Caco-2 (cell line): ENCODE measurements at regions of chr6 and their contacts with region 1.

Region 1: DNA sequence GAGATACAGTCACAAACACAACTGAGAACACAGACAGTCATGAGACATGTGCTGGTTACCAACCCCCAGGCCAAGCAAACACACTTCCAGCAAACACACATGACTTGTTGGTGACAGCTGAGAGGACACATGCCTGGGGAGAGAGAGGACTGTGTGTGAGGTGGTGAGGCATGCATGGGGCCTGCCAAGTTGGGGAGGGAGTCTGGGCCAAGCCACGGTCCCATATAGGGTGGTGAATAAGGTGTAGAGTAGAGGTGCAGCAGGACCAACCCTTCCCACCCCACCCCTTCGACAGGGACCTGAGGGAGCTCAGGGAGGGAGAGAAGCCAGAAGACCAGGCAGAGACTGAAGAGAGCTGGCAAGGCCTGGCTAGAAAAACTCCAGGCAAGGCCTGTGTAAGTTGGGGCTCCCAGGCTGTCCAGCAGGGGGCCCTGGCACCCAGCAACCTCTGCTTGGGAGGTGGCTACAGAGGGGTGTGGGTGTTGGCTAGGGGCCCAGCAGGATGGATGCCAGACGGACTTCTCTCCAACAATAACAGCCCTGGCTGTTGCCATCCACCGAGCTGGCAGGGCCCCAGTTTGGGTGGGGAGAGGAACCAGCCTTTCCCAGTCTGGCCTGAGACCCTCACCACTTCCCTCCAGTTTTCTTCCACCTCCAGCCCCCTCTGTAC is 2.0 kb upstream of the SLC29A1 start:
- DNase-seq: peak; percentile 74 to 79
- H3K4me3 ChIP-seq: no peak overlapping the region
- H3K4me3 Mint-ChIP-seq: peak overlapping the region; percentile 89
- H3K27ac Mint-ChIP-seq: no peak overlapping the region
- H3K4me1 ChIP-seq: peaks cover 45% of the 10 kb centered on the region
- H3K4me1 Mint-ChIP-seq: peaks cover 15% of the 10 kb centered on the region
- H3K27me3 ChIP-seq: no peaks in the 10 kb centered on the region
- H3K27me3 Mint-ChIP-seq: no peaks in the 10 kb centered on the region
- CTCF ChIP-seq: peak; percentile 59 to 83

Region 2: GRCh38 chr6:42387336-42387735 is 1834.1 kb before region 1 on chr6:
- CTCF ChIA-PET with region 1: no interaction called
- POLR2A ChIA-PET with region 1: no interaction called
- intact Hi-C with region 1: no loop called
- DNase-seq: no peak
- H3K4me3 ChIP-seq: no peak overlapping the region
- H3K4me3 Mint-ChIP-seq: no peak overlapping the region
- H3K27ac Mint-ChIP-seq: no peak overlapping the region
- H3K4me1 ChIP-seq: no peaks in the 10 kb centered on the region
- H3K4me1 Mint-ChIP-seq: no peaks in the 10 kb centered on the region
- H3K27me3 ChIP-seq: no peaks in the 10 kb centered on the region
- H3K27me3 Mint-ChIP-seq: peaks cover 6% of the 10 kb centered on the region
- CTCF ChIP-seq: no peak

Region 3: DNA sequence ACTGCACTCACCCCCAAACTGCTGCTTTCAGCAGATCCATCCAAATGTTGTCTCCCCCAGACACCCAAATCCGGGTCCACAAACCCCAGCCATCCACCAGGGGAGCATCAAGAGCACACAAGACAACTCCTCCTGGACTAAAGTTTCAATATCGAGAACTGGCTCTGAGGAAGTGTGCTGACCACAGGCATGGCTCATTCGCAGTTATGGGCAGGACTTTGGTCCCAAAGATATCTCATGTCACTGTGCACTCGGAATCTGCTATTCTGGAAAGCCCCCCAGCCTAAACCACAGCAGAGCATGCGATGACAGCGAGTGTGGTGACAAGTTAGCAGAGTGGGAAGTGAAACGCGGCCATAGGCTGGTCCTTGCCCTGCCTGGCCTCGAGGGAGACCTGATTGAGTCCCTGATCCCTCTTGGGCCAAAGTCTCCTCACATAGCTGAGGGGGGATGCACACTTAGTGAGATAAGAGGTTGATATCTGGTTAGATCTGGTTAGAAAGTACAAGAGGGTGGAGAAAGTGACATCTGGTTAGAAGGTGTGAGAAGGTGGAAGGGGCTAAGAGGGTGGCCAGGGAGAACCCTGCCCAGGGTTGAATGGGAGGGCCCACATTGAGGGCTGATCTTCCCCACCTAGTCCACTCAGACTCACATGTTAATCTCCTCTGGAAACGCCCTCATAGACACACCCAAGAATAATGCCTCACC is 243.9 kb before region 1 on chr6:
- CTCF ChIA-PET with region 1: no interaction called
- POLR2A ChIA-PET with region 1: no interaction called
- intact Hi-C with region 1: no loop called
- DNase-seq: no peak
- H3K4me3 ChIP-seq: no peak overlapping the region
- H3K4me3 Mint-ChIP-seq: no peak overlapping the region
- H3K27ac Mint-ChIP-seq: no peak overlapping the region
- H3K4me1 ChIP-seq: peaks cover 18% of the 10 kb centered on the region
- H3K4me1 Mint-ChIP-seq: peaks cover 7% of the 10 kb centered on the region
- H3K27me3 ChIP-seq: no peaks in the 10 kb centered on the region
- H3K27me3 Mint-ChIP-seq: no peaks in the 10 kb centered on the region
- CTCF ChIP-seq: no peak

Region 4: GRCh38 chr6:44172731-44173500 is 48.5 kb before region 1 on chr6:
- CTCF ChIA-PET with region 1: interaction called, 10 read pairs
- POLR2A ChIA-PET with region 1: interaction called, 3 read pairs
- intact Hi-C with region 1: loop called (anchors 1 kb)
- DNase-seq: peak; percentile 79 to 80
- H3K4me3 ChIP-seq: no peak overlapping the region
- H3K4me3 Mint-ChIP-seq: no peak overlapping the region
- H3K27ac Mint-ChIP-seq: no peak overlapping the region
- H3K4me1 ChIP-seq: peaks cover 8% of the 10 kb centered on the region; the same call in 1 of the 2 replicates
- H3K4me1 Mint-ChIP-seq: peaks cover 7% of the 10 kb centered on the region
- H3K27me3 ChIP-seq: no peaks in the 10 kb centered on the region
- H3K27me3 Mint-ChIP-seq: no peaks in the 10 kb centered on the region
- CTCF ChIP-seq: peak; percentile 79 to 88

Region 5: GRCh38 chr6:44203991-44204390 is 17.4 kb before region 1 on chr6:
- CTCF ChIA-PET with region 1: interaction called, 3 read pairs
- POLR2A ChIA-PET with region 1: interaction called, 4 read pairs
- intact Hi-C with region 1: loop called (anchors 1 kb)
- DNase-seq: peak; percentile 44 to 80
- H3K4me3 ChIP-seq: no peak overlapping the region
- H3K4me3 Mint-ChIP-seq: peak overlapping the region; percentile 7
- H3K27ac Mint-ChIP-seq: peak overlapping the region; percentile 81
- H3K4me1 ChIP-seq: peaks cover 36% of the 10 kb centered on the region
- H3K4me1 Mint-ChIP-seq: peaks cover 40% of the 10 kb centered on the region
- H3K27me3 ChIP-seq: no peaks in the 10 kb centered on the region
- H3K27me3 Mint-ChIP-seq: no peaks in the 10 kb centered on the region
- CTCF ChIP-seq: no peak

Region 6: DNA sequence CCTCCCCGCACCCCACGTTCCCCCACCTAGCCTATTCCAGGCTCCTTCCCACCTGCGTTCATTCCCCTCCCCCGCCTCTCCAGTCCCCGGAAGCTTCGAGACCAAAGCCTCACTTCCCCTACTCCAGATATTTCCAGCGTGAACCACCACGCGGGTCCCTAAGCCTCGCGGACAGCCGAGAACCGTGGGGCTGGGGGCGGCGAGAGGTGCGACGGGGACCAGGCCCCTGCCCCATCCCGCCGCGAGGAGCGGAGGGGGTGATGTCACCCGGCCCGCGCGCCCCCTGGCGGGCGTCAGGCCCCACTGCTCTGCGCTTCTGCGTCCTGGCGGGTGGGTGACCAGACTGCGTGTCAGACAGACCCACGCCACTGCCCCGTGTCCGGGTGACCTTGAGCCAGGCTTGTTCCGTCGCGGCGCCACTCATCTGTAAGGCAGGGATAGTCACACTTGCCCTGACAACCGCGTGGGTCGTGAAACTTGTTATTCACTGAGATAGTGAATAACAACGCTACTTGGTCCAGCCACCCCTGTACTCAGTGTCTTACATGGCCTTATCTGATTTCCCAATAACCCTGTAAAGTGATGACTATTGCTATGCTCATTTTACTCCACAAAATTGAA is 16.5 kb after region 1 on chr6:
- CTCF ChIA-PET with region 1: interaction called, 25 read pairs
- POLR2A ChIA-PET with region 1: interaction called, 5 read pairs
- intact Hi-C with region 1: loop called (anchors 1 kb)
- DNase-seq: peak; percentile 69 to 90
- H3K4me3 ChIP-seq: peak overlapping the region; percentile 58
- H3K4me3 Mint-ChIP-seq: peak overlapping the region; percentile 89
- H3K27ac Mint-ChIP-seq: peak overlapping the region; percentile 95
- H3K4me1 ChIP-seq: peaks cover 19% of the 10 kb centered on the region
- H3K4me1 Mint-ChIP-seq: peaks cover 17% of the 10 kb centered on the region
- H3K27me3 ChIP-seq: no peaks in the 10 kb centered on the region
- H3K27me3 Mint-ChIP-seq: no peaks in the 10 kb centered on the region
- CTCF ChIP-seq: peak; percentile 92 to 93

Region 7: DNA sequence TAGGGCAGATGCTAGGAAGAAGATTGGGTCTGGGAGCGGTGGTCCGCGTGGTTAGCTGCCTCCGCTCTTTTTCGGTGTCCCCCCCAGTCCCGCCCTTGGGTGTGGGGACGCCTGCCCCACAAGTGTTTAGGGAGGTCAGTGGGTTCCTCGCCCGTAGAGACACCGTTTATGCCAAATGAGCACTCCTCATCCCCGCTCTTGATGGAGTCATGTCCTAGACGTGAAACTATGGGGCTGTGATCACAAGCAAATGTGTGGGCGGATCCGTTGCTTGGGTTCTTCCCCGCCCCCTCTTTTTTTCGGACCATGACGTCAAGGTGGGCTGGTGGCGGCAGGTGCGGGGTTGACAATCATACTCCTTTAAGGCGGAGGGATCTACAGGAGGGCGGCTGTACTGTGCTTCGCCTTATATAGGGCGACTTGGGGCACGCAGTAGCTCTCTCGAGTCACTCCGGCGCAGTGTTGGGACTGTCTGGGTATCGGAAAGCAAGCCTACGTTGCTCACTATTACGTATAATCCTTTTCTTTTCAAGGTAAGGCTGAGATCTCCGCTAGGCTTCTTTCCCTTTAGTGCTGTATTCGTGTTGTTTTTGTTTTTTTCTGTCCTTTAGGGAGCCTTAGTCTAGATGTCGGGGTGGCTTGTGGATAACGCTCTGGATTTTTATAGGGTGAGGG is 25.4 kb after region 1 on chr6 and contains the start of gene HSP90AB1:
- CTCF ChIA-PET with region 1: interaction called, 8 read pairs
- POLR2A ChIA-PET with region 1: interaction called, 14 read pairs
- intact Hi-C with region 1: no loop called
- DNase-seq: peak; percentile 95 to 98
- H3K4me3 ChIP-seq: peak within 1 kb of the TSS; percentile 97
- H3K4me3 Mint-ChIP-seq: peak within 1 kb of the TSS; percentile 97
- H3K27ac Mint-ChIP-seq: peak within 1 kb of the TSS; percentile 99
- H3K4me1 ChIP-seq: peaks cover 15% of the 10 kb centered on the region
- H3K4me1 Mint-ChIP-seq: peaks cover 13% of the 10 kb centered on the region
- H3K27me3 ChIP-seq: no peaks in the 10 kb centered on the region
- H3K27me3 Mint-ChIP-seq: no peaks in the 10 kb centered on the region
- CTCF ChIP-seq: no peak
- total RNA-seq, gene HSP90AB1: 967 and 1,046 TPM in 2 replicates

Region 8: DNA sequence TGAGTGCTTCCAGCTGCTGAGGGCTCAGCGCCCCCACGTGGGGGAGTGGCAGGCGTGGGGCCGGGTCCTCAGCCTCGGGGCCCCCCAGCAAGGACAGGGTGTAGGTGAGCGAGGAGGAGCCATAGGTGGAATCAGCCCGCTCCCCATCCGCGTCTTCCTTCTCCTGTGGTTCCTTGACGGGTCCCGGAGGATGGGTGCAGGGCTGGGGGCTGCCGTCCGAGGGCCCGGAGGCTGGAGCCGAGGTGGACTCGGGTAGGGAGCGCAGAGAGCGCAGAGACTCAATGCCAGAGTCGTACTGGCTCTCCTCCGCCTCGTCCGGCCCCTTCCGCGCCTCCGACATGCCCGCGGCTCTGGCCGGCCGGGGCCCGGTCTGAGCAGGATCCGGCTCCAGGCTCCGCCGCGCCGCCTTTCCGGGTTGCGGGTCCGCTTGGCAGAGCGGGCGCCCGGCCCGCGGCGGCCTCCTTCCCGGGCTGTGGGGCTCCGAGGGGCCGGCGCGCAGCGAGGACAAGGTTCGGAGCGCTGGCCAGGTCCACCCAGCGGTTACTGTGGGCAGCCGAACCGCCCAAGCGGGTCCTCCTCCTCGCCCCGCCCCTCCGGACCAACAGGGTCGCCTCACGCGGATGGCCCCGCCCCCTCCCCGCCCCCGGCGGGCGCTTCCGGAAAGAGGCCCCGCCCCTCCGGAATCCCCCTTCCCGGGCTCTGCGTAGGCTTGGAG is 43.7 kb after region 1 on chr6 and contains the start of gene NFKBIE:
- CTCF ChIA-PET with region 1: no interaction called
- POLR2A ChIA-PET with region 1: no interaction called
- intact Hi-C with region 1: no loop called
- DNase-seq: peak; percentile 91 to 95
- H3K4me3 ChIP-seq: peak within 1 kb of the TSS; percentile 71
- H3K4me3 Mint-ChIP-seq: peak within 1 kb of the TSS; percentile 93
- H3K27ac Mint-ChIP-seq: peak within 1 kb of the TSS; percentile 69
- H3K4me1 ChIP-seq: peaks cover 26% of the 10 kb centered on the region
- H3K4me1 Mint-ChIP-seq: peaks cover 13% of the 10 kb centered on the region
- H3K27me3 ChIP-seq: peaks cover 6% of the 10 kb centered on the region
- H3K27me3 Mint-ChIP-seq: peaks cover 4% of the 10 kb centered on the region
- CTCF ChIP-seq: peak; percentile 21 to 41
- total RNA-seq, gene NFKBIE: 8.4 and 10.1 TPM in 2 replicates

Region 9: DNA sequence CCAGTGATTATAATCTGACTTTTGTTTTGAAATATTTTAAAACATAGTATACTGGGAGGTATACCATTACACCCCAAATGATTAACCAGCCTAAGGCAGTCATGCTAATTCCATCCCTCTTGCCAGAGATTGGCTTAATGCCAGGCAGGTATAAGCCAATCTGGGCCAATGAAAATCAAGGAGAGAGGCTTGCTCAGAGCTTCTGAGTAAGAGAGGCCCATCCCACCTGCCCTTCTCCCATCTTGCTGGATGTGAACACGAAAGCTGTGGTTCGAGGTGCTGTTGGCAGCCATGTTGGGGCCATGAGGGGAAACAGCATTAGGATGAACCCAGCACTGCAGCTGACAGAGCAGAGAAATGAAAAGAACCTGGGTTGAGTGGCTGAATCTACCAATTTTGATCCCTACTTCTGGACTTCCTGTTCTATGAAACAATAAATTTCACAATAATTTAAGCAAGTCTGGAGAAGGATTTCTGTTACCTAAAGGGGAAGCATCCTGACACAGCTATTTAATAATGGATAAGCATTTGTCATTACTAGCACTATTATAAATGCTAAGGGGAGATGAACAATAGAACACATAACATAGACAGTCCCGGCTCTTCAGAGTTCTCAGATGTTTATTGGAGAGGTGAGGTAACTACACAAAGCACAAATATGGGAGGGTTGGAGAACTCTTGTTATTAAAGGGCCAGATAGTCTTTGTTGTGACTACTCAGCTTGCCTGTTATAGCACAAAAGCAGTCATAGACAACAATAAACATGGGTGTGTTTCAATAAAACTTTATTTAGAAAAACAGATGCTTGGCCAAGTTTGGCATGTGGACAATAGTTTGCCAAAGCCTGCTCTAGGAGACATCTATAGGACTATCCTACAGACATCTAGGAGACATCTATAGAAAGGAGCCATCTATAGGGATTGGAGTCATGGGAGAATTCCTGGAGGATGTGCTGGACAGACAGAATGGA is 318.6 kb after region 1 on chr6:
- CTCF ChIA-PET with region 1: no interaction called
- POLR2A ChIA-PET with region 1: no interaction called
- intact Hi-C with region 1: no loop called
- DNase-seq: no peak
- H3K4me3 ChIP-seq: no peak overlapping the region
- H3K4me3 Mint-ChIP-seq: no peak overlapping the region
- H3K27ac Mint-ChIP-seq: no peak overlapping the region
- H3K4me1 ChIP-seq: no peaks in the 10 kb centered on the region
- H3K4me1 Mint-ChIP-seq: no peaks in the 10 kb centered on the region
- H3K27me3 ChIP-seq: peaks cover 1% of the 10 kb centered on the region; the same call in 1 of the 2 replicates
- H3K27me3 Mint-ChIP-seq: peaks cover 15% of the 10 kb centered on the region
- CTCF ChIP-seq: no peak